ENCODE measurements at regions of chr11 and their contacts with region 1.

Region 1: DNA sequence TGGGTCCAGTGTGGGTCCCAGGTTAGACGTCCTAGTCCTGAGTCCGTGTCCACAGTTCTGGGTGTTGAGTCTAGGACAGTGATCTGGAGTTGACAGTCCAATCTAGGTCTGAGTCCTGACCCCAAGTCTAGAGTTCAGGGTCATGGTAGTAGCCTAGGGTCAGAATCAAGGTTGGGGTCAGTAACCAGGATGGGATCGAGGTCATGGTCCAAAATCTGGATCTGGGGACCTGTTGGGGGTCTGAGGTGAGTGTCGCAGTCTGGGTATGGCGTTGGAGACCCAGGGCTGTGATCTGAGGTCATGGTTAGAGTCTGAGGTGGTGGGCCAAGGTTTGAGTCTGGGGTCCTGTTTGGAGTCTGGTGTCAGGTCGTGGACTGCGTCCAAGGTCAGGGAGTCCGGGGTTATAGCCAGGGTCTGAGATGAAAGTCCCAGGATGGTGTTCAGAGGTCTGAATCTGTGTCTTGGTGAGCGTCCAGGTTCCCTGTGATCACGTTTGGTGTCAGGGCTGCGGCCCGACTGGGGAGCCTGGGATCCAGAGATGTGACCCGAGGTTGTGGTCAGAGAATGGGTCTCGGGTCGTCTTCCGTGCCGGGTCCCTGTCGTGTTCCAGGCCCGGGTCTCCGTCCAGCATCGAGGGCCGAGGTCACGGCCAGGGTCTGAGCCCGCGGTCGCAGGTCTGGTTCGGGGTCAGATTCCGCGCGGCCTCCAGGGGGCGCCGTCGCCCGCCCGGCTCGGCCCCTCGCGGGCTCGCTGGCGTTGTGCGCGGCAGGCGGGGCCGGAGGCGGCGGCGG is 445 bp upstream of the GRK2 start:
- DNase-seq: peak; percentile 56 to 85 (median 79)
- H3K4me3 ChIP-seq: peak overlapping the region in 1 of 4 donors; percentile 24
- H3K27ac ChIP-seq: peak overlapping the region in 4 of 5 donors; percentile 2 to 89 (median 47)
- H3K4me1 ChIP-seq: peaks cover 25 to 64% of the 10 kb centered on the region in 2 donors
- H3K27me3 ChIP-seq: no peaks in the 10 kb centered on the region
- CTCF ChIP-seq: peak in 5 of 6 experiments; percentile 53 to 94 (median 70)
- POLR2A ChIP-seq: no peak

Region 2: GRCh38 chr11:67071420-67072284 is 194.2 kb before region 1 on chr11:
- intact Hi-C with region 1: no loop called
- DNase-seq: peak; percentile 69 to 92 (median 86)
- H3K4me3 ChIP-seq: peak overlapping the region in 2 of 4 donors; percentile 13 to 30
- H3K27ac ChIP-seq: no peak overlapping the region
- H3K4me1 ChIP-seq: no peaks in the 10 kb centered on the region
- H3K27me3 ChIP-seq: no peaks in the 10 kb centered on the region
- CTCF ChIP-seq: peak; percentile 76 to 92 (median 83)
- POLR2A ChIP-seq: no peak

Region 3: DNA sequence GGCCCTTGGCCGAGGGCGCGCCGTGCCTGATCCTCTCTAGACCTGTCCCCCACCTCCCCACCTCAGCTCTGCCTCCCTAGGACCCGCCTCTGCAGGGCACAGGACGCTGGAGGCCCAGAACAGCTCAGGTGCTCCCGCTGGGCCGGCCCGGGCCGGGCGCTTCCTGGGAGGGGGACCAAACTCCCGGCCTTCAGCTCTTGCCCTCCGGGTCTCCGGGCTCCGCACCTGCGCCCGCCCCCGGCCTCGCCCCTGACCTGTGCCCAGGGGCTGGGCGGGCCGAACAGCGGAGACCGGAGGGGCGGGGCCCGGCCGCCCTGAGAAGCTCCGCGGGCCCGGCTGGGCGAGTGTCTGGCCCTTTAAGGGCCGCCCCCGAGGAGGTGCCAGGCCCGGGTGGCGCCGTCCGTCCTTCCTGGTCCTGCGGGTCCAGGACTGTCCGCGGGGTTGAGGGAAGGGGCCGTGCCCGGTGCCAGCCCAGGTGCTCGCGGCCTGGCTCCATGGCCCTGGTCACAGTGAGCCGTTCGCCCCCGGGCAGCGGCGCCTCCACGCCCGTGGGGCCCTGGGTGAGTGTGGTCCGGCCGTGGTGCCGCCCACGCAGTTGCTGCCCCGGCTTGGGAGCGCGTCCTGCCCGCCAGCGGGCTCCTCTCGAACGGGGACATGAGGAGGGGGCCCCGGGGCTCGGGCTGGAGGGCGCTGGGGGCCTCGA is 37.5 kb after region 1 on chr11 and contains the start of gene SSH3:
- intact Hi-C with region 1: loop called in 1 of 2 experiments (anchors 5 kb)
- DNase-seq: peak; percentile 61 to 75 (median 70)
- H3K4me3 ChIP-seq: peak within 1 kb of the TSS; percentile 26 to 93 (median 72)
- H3K27ac ChIP-seq: peak within 1 kb of the TSS in 3 of 5 donors; percentile 0 to 68 (median 8)
- H3K4me1 ChIP-seq: peaks cover 15 to 21% of the 10 kb centered on the region in 2 donors
- H3K27me3 ChIP-seq: no peaks in the 10 kb centered on the region
- CTCF ChIP-seq: no peak
- POLR2A ChIP-seq: peak in 1 of 2 donors; percentile 30
- total RNA-seq, gene SSH3: 5.7 to 31.2 (median 25.0) TPM

Region 4: DNA sequence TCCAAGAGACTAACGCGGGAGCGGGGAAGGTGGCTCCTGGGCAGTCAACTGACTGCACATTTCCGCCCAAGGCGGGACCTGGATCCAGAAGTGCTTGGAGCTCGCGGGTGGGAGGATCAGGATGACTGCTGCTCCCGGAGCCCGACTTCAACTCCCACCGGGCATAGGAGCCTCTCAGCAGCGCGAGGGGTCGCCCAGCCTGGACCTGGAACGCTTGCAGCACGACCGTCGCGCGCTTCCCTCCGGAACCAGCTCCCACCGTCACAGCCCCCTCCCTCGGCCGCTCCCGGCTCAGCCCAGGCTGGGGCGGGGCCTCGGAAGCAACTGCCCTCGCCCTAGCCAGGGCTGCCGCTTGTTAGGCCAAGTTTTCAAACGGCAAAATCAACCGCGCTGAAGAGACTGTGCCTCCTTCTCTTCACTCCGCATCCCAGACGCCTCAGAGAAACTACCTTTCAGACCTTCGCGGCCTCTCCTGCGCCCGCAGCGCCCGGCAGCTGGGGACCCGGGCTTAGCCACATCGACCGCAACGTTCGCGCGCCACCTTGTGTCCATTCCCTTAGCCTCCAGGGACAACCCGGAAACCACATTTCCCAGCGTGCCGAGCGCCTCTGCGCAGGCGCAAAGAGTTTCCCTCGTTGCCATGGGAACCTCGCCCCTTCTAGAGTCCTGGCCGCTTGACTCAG is 51.5 kb after region 1 on chr11:
- intact Hi-C with region 1: loop called (anchors 2 kb)
- DNase-seq: peak; percentile 95 to 99 (median 97)
- H3K4me3 ChIP-seq: peak overlapping the region; percentile 26 to 90 (median 60)
- H3K27ac ChIP-seq: peak overlapping the region; percentile 44 to 94 (median 80)
- H3K4me1 ChIP-seq: peaks cover 0 to 12% of the 10 kb centered on the region in 2 donors
- H3K27me3 ChIP-seq: no peaks in the 10 kb centered on the region
- CTCF ChIP-seq: peak; percentile 81 to 100 (median 98)
- POLR2A ChIP-seq: peak; percentile 34 to 46